CD4-positive, alpha-beta T cell (primary cell): ENCODE measurements at regions of chr12 and their contacts with region 1.

Region 1: DNA sequence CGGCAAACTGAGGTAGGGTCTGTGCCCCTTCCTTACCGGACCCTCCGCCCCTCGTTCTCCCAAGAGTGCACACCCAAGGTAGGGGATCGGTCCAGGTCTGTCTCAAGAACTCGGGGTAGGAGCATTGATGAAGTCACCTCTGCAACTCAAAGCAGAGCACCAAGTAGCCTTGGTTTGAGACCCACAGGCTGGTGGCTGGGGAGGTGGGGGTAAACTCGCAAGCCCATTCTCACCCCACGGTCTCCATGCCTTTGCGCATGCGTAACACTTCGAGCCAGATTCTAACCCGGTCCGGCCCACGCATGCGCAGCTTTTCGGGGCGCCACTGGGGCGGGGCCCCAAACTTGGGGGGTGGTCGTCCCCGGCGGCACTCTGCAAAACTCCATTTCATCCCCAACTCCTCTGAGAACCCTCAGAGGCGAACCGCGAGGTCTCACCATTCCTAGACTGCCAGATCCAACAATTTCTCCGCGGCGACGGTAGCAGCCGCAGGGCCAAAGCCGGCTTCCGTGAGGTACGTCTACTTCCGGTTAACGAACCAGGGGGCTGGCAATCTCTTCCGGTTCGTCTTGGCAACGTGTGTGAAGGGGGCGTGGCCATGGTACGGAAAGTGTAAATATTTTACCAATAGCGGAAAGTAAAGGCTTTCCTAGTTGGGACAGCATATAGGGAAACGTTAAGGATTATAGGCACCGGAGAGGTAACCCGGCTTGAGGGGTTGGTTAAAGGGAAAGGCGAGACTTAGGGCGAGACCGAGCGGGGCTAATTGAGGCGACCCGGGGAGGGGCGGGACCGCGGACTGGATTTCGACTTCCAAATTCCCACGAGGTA is at the start of gene MCRS1:
- DNase-seq: peak; percentile 82 to 95 (median 88)
- ATAC-seq: peak; percentile 85
- H3K4me3 ChIP-seq: peak within 1 kb of the TSS; percentile 67
- H3K4me3 Mint-ChIP-seq: peak within 1 kb of the TSS; percentile 97
- H3K27ac ChIP-seq: peak within 1 kb of the TSS; percentile 93 to 94
- H3K27ac Mint-ChIP-seq: peak within 1 kb of the TSS; percentile 99
- H3K4me1 ChIP-seq: peaks cover 49% of the 10 kb centered on the region
- H3K4me1 Mint-ChIP-seq: peaks cover 71% of the 10 kb centered on the region
- H3K27me3 ChIP-seq: no peaks in the 10 kb centered on the region
- H3K27me3 Mint-ChIP-seq: no peaks in the 10 kb centered on the region
- CTCF ChIP-seq: no peak
- total RNA-seq, gene MCRS1: 49.0 to 56.4 TPM

Region 2: GRCh38 chr12:49540229-49541136 is 27.3 kb before region 1 on chr12:
- CTCF ChIA-PET with region 1: no interaction called
- POLR2A ChIA-PET with region 1: interaction called, 8 read pairs
- intact Hi-C with region 1: loop called in 1 of 2 experiments (anchors 1 kb)
- DNase-seq: peak in 1 of 14 experiments; percentile 34
- ATAC-seq: no peak
- H3K4me3 ChIP-seq: no peak overlapping the region
- H3K4me3 Mint-ChIP-seq: peak overlapping the region; percentile 83
- H3K27ac ChIP-seq: no peak overlapping the region
- H3K27ac Mint-ChIP-seq: peak overlapping the region; percentile 36
- H3K4me1 ChIP-seq: peaks cover 32% of the 10 kb centered on the region
- H3K4me1 Mint-ChIP-seq: peaks cover 28% of the 10 kb centered on the region
- H3K27me3 ChIP-seq: peaks cover 0 to 7% of the 10 kb centered on the region in 2 experiments
- H3K27me3 Mint-ChIP-seq: peaks cover 5% of the 10 kb centered on the region
- CTCF ChIP-seq: no peak